ENCODE measurements at regions of chr4 and their contacts with region 1.

Region 1: DNA sequence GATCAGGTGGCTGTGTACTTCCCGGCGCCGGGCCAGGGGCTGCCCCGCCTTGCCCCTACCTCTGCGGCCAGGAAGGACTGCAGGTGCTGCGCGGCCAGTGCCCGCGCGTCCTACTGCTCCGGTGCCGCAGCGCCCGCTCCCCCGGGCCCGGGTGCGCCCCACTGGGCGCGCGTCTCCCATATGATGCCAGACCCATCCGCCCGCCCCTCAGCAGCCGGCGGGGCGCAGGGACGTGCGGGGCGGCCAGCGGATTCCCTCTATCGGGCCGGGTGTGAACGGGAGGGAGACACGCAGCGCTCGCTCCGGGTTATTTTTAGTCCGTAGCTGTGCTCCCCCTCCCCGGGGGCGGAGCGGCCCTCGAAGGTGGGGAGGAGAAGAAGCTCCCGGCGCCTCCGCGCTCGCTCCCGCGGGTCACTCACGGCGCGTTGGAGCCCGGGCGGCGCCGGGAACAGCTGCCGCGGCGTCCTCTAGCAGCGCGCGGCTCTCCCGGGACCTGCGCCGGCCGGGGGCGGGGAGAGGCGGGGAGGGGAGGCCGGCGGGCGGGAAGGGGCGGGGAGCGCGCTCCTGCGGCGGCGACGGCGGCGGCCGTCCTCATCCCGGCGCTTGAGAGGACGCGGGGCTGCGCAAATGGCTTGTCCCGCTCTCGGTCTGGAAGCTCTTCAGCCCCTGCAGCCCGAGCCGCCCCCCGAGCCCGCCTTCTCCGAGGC is 103.6 kb downstream of the UCHL1 start:
- DNase-seq: peak; percentile 88
- ATAC-seq: peak; percentile 88

Region 2: DNA sequence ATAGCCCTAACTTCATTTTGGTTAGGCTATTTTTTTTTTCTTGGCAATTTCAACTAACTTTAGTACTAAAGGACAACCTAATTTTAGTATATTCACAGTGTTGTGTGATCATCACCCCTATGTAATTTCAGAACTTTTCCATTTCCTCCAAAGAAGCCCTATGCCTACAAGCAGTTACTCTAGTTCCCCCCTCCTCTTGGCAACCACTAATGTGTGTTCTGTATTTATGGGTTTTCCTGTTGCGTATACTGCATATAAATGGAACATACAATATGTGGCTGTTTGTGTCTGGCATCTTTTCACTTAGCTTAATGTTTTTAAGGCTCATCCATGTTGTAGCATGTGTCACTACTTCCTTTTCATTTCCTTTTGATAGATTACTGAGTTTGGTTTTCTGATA is 1246.2 kb before region 1 on chr4:
- intact Hi-C with region 1: no loop called
- DNase-seq: no peak
- ATAC-seq: no peak

Region 3: DNA sequence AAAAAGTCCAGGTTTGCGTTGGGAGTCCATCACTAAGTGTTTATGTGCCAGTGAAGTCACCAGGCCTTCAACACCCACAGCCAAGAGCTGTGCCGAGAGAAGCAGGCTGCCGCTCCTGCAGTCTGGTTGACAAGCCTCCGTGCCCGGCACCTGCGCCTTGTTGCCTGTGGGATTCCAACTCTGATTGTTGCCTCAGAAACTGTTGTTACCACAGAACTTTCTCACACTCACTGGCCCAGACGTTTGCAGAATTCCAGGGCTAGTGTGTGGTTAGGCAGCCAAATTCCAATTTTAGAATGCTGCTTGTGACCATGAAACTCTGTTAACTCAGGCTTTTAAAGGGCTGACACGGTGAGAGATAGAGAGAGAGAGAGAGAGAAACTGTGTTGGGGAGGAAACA is 58.1 kb after region 1 on chr4:
- intact Hi-C with region 1: loop called (anchors 2 kb)
- DNase-seq: peak; percentile 84
- ATAC-seq: peak; percentile 95

Region 4: GRCh38 chr4:41538017-41538733 is 177.8 kb after region 1 on chr4 and contains the start of gene LIMCH1:
- intact Hi-C with region 1: loop called (anchors 5 kb)
- DNase-seq: peak; percentile 87
- ATAC-seq: peak; percentile 88
- total RNA-seq, gene LIMCH1: 272 TPM